ENCODE measurements at regions of chr15 and their contacts with region 1.

Region 1: DNA sequence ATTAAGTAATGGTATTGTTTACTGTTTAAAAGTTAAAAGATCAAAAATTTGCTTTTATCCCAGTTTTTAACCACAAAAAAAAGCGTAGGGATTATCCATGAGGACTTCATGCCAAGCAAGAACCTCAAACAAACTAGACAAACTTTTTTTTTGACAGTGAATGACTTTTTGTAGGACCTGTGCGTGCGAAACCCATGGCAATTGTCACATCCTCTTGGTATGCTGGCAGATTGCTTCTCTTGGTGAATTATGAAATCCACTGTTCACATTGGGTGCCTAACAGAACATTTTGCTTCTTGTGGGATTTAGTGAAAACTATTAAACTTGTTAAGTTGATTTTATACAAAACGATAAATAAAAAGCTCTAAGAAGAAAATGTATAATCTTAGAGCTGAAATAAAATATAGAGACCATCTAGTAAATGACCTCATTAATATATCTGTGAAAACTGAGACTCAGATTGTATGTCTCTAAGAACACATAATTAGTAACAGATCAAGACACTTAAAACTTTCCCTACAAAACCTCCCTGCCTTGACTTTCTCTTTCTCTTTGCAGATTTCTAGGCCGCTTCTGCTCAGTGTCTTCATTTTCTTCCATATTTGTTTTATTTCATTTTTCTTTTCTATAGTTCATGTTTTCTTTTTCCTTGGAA is 87.3 kb upstream of the CGNL1 start:
- DNase-seq: no peak
- ATAC-seq: no peak
- H3K4me3 ChIP-seq: no peak overlapping the region
- H3K27ac ChIP-seq: no peak overlapping the region
- H3K4me1 ChIP-seq: no peaks in the 10 kb centered on the region
- H3K27me3 ChIP-seq: no peaks in the 10 kb centered on the region
- CTCF ChIP-seq: no peak
- POLR2A ChIP-seq: no peak
- RAD21 ChIP-seq: no peak

Region 2: DNA sequence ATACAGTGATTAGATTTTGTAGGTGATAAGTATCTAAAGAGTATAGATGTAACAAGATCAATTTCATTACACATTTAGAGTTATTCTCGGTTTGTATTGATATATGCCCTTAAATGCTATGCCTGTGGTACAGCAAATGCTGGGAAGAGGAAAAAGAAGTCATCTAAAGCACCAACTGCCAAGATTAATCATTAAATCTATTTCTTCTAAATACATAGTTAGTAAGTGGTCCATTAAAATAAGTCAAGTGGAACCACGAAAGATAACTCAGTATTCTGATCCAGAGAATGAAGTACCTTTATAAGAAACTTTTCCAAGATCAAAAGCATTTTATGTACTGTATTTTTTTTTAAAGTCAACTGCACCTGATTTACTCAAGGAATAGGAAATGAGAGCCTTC is 54.9 kb before region 1 on chr15:
- CTCF ChIA-PET with region 1: no interaction called
- POLR2A ChIA-PET with region 1: no interaction called
- RAD21 ChIA-PET with region 1: no interaction called
- intact Hi-C with region 1: loop called (anchors 5 kb)
- DNase-seq: no peak
- ATAC-seq: no peak
- H3K4me3 ChIP-seq: no peak overlapping the region
- H3K27ac ChIP-seq: no peak overlapping the region
- H3K4me1 ChIP-seq: no peaks in the 10 kb centered on the region
- H3K27me3 ChIP-seq: no peaks in the 10 kb centered on the region
- CTCF ChIP-seq: no peak
- POLR2A ChIP-seq: no peak
- RAD21 ChIP-seq: no peak

Measured in HCT116 (cell line).